Motor neuron (in vitro differentiated cells): ENCODE measurements at regions of chr3 and their contacts with region 1.

Region 1: DNA sequence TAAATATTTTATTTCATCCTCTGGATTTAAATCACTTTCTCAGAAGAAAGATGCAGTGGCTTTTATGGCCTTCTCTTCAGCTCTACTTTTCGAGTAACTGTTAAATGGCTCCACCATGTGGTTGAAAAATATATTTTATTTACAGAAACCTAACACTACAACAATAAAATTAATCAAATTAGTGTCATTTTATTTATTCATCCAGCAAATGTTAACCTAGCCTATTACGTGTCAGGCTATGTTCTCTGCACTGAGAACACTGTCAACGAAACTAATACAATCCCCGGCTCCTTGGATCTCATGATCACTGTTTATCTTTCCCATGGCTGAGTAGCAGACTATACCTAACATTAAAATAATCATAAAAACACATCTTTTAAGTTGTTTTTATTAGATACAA is 148.0 kb upstream of the OSTN start:
- ATAC-seq: peak; percentile 33 to 71 (median 48)
- H3K4me3 ChIP-seq: no peak overlapping the region
- H3K27ac ChIP-seq: no peak overlapping the region
- H3K4me1 ChIP-seq: no peaks in the 10 kb centered on the region

Region 2: DNA sequence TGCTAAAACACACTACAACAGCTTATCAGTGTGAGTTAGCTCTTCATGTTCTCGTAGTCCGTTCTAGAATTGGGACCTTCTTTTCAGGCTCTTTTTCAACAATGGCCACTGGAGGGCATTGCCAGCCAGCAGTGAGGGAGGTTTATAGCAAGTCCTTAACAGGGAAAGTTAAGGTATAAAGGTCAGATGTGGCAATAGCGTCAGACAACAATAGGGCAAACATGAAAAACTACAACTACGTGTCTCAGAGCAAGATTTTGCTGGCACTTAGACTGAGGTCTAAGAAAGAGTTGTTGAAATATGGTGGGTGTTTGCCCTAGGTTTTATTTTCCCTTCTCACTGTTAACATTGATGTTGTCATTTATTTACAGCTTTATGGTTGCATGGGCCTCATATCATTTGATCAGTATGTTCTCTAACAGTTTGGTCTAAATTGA is 349.9 kb before region 1 on chr3:
- in situ Hi-C with region 1: loop called in 1 of 9 experiments (anchors 25 kb)
- ATAC-seq: peak; percentile 27 to 77 (median 62)
- H3K4me3 ChIP-seq: no peak overlapping the region
- H3K27ac ChIP-seq: no peak overlapping the region
- H3K4me1 ChIP-seq: peaks cover 0 to 3% of the 10 kb centered on the region in 2 donors

Region 3: GRCh38 chr3:190811775-190812480 is 239.1 kb before region 1 on chr3:
- in situ Hi-C with region 1: loop called in 3 of 9 experiments (anchors 10 to 25 kb)
- ATAC-seq: peak in 6 of 8 experiments; percentile 26 to 81 (median 60)
- H3K4me3 ChIP-seq: no peak overlapping the region
- H3K27ac ChIP-seq: no peak overlapping the region
- H3K4me1 ChIP-seq: no peaks in the 10 kb centered on the region

Region 4: GRCh38 chr3:190883973-190884832 is 166.8 kb before region 1 on chr3:
- in situ Hi-C with region 1: loop called in 2 of 9 experiments (anchors 10 to 25 kb)
- ATAC-seq: peak in 5 of 8 experiments; percentile 34 to 75 (median 60)
- H3K4me3 ChIP-seq: no peak overlapping the region
- H3K27ac ChIP-seq: no peak overlapping the region
- H3K4me1 ChIP-seq: no peaks in the 10 kb centered on the region

Region 5: GRCh38 chr3:191176038-191176785 is 125.2 kb after region 1 on chr3:
- in situ Hi-C with region 1: no loop called
- ATAC-seq: no peak
- H3K4me3 ChIP-seq: no peak overlapping the region
- H3K27ac ChIP-seq: no peak overlapping the region
- H3K4me1 ChIP-seq: peaks cover 0 to 5% of the 10 kb centered on the region in 2 donors

Region 6: DNA sequence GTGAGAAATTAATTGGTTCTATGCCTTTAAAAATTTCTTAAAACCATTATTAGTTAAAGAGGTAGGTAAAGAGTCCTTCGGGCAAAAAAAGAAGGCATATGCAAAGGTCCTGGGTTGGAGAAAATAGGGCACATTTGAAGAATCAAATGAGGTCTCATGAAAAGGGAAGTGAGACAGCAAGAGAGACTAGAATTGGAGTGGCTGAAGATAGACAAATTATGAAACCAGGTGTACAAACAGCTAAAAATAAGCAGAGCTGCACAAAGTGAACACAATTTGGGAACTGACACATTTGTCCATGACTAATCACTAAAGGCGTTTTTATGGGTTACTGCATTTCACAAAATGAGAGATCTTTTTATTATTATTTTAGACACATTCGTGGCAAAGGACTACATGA is 991.1 kb after region 1 on chr3:
- in situ Hi-C with region 1: no loop called
- ATAC-seq: no peak
- H3K4me3 ChIP-seq: no peak overlapping the region
- H3K27ac ChIP-seq: no peak overlapping the region
- H3K4me1 ChIP-seq: no peaks in the 10 kb centered on the region